T-cell (primary cell): ENCODE measurements at regions of chr7 and their contacts with region 1.

Region 1: DNA sequence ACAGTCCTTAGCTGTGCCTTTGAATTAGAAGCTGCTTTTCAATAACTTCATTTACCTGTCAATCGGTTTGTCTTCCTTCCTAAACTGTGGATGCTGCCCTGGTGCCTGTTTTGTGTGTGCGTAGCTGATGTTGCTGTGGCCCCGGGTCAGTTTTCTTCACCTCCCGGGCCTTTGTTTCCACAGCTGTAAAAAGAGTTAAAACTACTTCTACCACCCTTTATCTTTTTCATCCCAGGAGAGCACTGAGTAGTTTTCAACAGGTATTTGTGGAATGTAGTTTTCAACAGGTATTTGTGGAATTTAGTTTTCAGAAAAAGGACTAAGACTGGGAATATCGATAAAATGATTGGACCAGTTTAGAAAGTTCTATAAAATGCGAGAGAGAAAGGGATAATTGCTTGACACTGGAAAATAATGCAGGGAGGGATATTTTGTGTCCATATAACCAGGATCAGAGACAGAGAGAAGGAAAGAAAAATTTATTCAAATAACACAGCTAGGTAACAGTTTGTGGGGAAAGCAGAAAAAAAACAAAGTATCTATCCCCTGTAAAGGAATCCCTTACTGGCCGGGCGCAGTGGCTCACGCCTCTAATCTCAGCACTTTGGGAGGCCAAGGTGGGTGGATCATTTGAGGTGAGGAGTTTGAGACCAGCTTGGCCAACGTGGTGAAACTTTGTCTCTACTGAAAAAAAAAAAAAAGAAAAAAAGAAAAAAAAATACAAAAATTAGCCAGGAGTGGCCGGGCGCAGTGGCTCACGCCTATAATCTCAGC is 15.9 kb upstream of the IGF2BP3 start:
- DNase-seq: no peak
- ATAC-seq: no peak
- H3K4me3 ChIP-seq: no peak overlapping the region
- H3K4me3 Mint-ChIP-seq: no peak overlapping the region
- H3K27ac ChIP-seq: no peak overlapping the region
- H3K27ac Mint-ChIP-seq: no peak overlapping the region
- H3K4me1 ChIP-seq: peaks cover 2 to 13% of the 10 kb centered on the region in 2 experiments
- H3K4me1 Mint-ChIP-seq: peaks cover 4 to 9% (median 6%) of the 10 kb centered on the region in 3 donors
- H3K27me3 ChIP-seq: peaks cover 0 to 5% of the 10 kb centered on the region in 2 experiments
- H3K27me3 Mint-ChIP-seq: peaks cover 4 to 13% of the 10 kb centered on the region in 2 donors

Region 2: GRCh38 chr7:22319424-22320403 is 1166.5 kb before region 1 on chr7:
- CTCF ChIA-PET with region 1: no interaction called
- POLR2A ChIA-PET with region 1: no interaction called
- DNase-seq: no peak
- ATAC-seq: no peak
- H3K4me3 ChIP-seq: no peak overlapping the region
- H3K4me3 Mint-ChIP-seq: no peak overlapping the region
- H3K27ac ChIP-seq: no peak overlapping the region
- H3K27ac Mint-ChIP-seq: no peak overlapping the region
- H3K4me1 ChIP-seq: no peaks in the 10 kb centered on the region
- H3K4me1 Mint-ChIP-seq: no peaks in the 10 kb centered on the region
- H3K27me3 ChIP-seq: no peaks in the 10 kb centered on the region
- H3K27me3 Mint-ChIP-seq: peaks cover 0 to 4% of the 10 kb centered on the region in 2 donors

Region 3: DNA sequence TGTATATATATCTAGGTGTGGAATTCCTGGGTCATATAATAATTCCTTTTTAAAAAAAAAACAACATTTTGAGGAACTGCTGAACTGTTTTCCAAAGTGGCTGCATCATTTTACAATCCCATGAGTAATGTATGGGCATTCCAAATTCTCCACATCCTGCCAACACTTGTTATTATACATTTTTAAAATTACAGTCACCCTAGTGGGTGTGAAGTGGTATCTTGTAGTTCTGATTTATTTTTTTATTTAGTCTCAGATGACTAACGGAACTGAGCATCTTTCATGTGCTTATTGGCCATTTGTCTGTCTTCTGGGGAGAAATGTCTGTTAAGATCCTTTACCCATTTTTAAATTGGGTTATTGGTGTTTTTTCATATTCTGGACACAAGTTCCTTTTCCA is 392.6 kb before region 1 on chr7:
- CTCF ChIA-PET with region 1: no interaction called
- POLR2A ChIA-PET with region 1: no interaction called
- DNase-seq: no peak
- ATAC-seq: no peak
- H3K4me3 ChIP-seq: no peak overlapping the region
- H3K4me3 Mint-ChIP-seq: no peak overlapping the region
- H3K27ac ChIP-seq: no peak overlapping the region
- H3K27ac Mint-ChIP-seq: no peak overlapping the region
- H3K4me1 ChIP-seq: no peaks in the 10 kb centered on the region
- H3K4me1 Mint-ChIP-seq: no peaks in the 10 kb centered on the region
- H3K27me3 ChIP-seq: peaks cover 0 to 14% of the 10 kb centered on the region in 2 experiments
- H3K27me3 Mint-ChIP-seq: peaks cover 2 to 4% of the 10 kb centered on the region in 2 donors

Region 4: GRCh38 chr7:23514755-23515154 is 28.6 kb after region 1 on chr7:
- CTCF ChIA-PET with region 1: interaction called in 1 of 2 experiments, 4 read pairs
- POLR2A ChIA-PET with region 1: interaction called, 3 to 11 read pairs
- DNase-seq: no peak
- ATAC-seq: peak in 1 of 4 experiments; percentile 25
- H3K4me3 ChIP-seq: no peak overlapping the region
- H3K4me3 Mint-ChIP-seq: no peak overlapping the region
- H3K27ac ChIP-seq: no peak overlapping the region
- H3K27ac Mint-ChIP-seq: peak overlapping the region in 1 of 2 donors; percentile 44
- H3K4me1 ChIP-seq: peaks cover 0 to 9% of the 10 kb centered on the region in 2 experiments
- H3K4me1 Mint-ChIP-seq: peaks cover 16 to 18% (median 17%) of the 10 kb centered on the region in 3 donors
- H3K27me3 ChIP-seq: no peaks in the 10 kb centered on the region
- H3K27me3 Mint-ChIP-seq: no peaks in the 10 kb centered on the region